ENCODE measurements at regions of chr3 and their contacts with region 1.

Region 1: GRCh38 chr3:152213203-152213602 is 55.5 kb upstream of the MBNL1 start:
- DNase-seq: no peak
- ATAC-seq: no peak
- H3K4me3 ChIP-seq: no peak overlapping the region
- H3K27ac ChIP-seq: no peak overlapping the region
- H3K4me1 ChIP-seq: peaks cover 15% of the 10 kb centered on the region
- H3K27me3 ChIP-seq: no peaks in the 10 kb centered on the region
- CTCF ChIP-seq: no peak

Region 2: GRCh38 chr3:152258448-152259393 is 45.5 kb after region 1 on chr3:
- CTCF ChIA-PET with region 1: no interaction called
- POLR2A ChIA-PET with region 1: no interaction called
- intact Hi-C with region 1: loop called (anchors 5 kb)
- DNase-seq: peak; percentile 97
- ATAC-seq: peak; percentile 92
- H3K4me3 ChIP-seq: peak overlapping the region; percentile 24
- H3K27ac ChIP-seq: peak overlapping the region; percentile 45
- H3K4me1 ChIP-seq: peaks cover 32% of the 10 kb centered on the region
- H3K27me3 ChIP-seq: no peaks in the 10 kb centered on the region
- CTCF ChIP-seq: no peak

Region 3: DNA sequence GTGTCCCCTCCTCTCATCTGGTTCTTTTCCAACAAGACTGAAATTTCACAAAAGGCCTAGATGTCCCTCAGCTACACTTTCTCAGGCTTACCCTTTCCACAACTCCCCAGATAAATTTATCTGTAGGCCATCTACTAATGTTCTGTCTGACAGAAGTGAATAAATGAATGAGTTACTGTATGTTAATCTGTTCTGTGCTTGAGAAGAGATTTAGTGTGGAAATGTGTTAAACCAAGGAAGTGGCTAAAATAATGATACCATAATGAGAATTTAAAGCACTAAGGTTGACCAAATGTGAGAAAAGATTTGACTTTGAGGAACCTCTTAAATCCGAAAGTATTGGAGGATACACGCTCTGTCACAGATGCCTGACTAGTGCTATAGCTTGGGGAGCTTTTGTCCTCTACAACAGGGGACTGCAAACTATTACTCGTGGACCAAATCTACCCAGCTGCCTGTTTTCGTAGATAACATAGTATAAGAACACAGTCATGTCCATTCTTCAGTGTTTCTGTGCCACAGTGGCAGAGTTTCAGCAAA is 546.9 kb after region 1 on chr3:
- CTCF ChIA-PET with region 1: no interaction called
- POLR2A ChIA-PET with region 1: no interaction called
- intact Hi-C with region 1: no loop called
- DNase-seq: no peak
- ATAC-seq: no peak
- H3K4me3 ChIP-seq: no peak overlapping the region
- H3K27ac ChIP-seq: no peak overlapping the region
- H3K4me1 ChIP-seq: no peaks in the 10 kb centered on the region
- H3K27me3 ChIP-seq: peaks cover 32% of the 10 kb centered on the region; the same call in 1 of the 2 replicates
- CTCF ChIP-seq: no peak

Measured in PC-3 (cell line).